HepG2 (cell line): ENCODE measurements at regions of chr7 and their contacts with region 1.

Region 1: GRCh38 chr7:149873074-149873969 is at the start of gene ATP6V0E2:
- DNase-seq: peak; percentile 91
- ATAC-seq: peak; percentile 92
- H3K4me3 ChIP-seq: peak within 1 kb of the TSS; percentile 69 to 80 (median 76)
- H3K27ac ChIP-seq: peak within 1 kb of the TSS; percentile 71
- H3K4me1 ChIP-seq: peaks cover 33% of the 10 kb centered on the region
- H3K27me3 ChIP-seq: no peaks in the 10 kb centered on the region
- CTCF ChIP-seq: no peak
- EP300 ChIP-seq: no peak
- POLR2A ChIP-seq: no peak; a peak in 2 of 4 replicates
- RAD21 ChIP-seq: no peak
- total RNA-seq, gene ATP6V0E2: 142 and 203 TPM in 2 replicates

Region 2: GRCh38 chr7:149838224-149838947 is 34.9 kb before region 1 on chr7 and contains the start of gene ZNF862:
- CTCF ChIA-PET with region 1: no interaction called
- POLR2A ChIA-PET with region 1: no interaction called
- in situ Hi-C with region 1: no loop called
- intact Hi-C with region 1: loop called (anchors 2 kb)
- DNase-seq: peak; percentile 95
- ATAC-seq: peak; percentile 97
- H3K4me3 ChIP-seq: peak within 1 kb of the TSS; percentile 68 to 95 (median 73)
- H3K27ac ChIP-seq: peak within 1 kb of the TSS; percentile 59
- H3K4me1 ChIP-seq: peaks cover 15% of the 10 kb centered on the region
- H3K27me3 ChIP-seq: 0 out of 5 replicates have a peak, but pooled peaks cover 0 to under 1% of the 10 kb centered on the region in 2 experiments
- CTCF ChIP-seq: peak; percentile 49
- EP300 ChIP-seq: 0 out of 4 replicates have a peak, but pooled peaks of 1 of the 2 experiments have one; percentile 21
- POLR2A ChIP-seq: peak; percentile 21 to 80; a peak in 2 of 4 replicates
- RAD21 ChIP-seq: no peak
- total RNA-seq, gene ZNF862: 0.89 and 1.0 TPM in 2 replicates